ENCODE measurements at regions of chr21 and their contacts with region 1.

Region 1: DNA sequence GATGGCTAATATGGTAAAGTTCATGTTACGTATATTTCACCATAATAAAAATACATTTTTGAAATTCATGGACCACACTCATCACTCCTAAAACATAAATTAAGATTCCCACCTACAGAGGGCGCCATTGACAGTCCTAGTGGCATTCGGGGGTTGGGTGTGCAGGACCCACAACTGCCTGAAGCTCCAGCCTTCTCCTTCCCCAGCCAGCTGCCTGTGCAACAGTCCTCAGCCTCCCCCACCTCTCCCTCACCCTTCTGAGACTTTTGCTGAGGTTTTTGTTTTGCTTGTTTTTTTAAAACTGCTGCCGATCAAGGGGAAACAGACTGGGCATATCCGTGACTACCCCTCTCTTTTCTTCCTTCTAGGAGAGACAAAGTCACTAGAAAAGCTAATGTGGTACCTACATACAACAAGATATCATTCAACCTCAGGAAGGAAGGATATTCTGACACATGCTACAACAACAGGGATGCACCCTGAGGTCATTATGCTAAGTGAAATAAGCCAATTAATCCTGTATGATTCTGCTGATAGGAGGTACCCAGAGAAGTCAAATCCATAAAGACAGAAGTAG is 9.2 kb upstream of the EVA1C start:
- DNase-seq: peak; percentile 59 to 83 (median 79)
- H3K4me3 ChIP-seq: no peak overlapping the region
- H3K27ac ChIP-seq: no peak overlapping the region
- H3K4me1 ChIP-seq: no peaks in the 10 kb centered on the region
- H3K27me3 ChIP-seq: peaks cover 0 to 5% (median 3%) of the 10 kb centered on the region in 5 experiments

Region 2: GRCh38 chr21:32131960-32132359 is 271.3 kb before region 1 on chr21:
- CTCF ChIA-PET with region 1: no interaction called
- POLR2A ChIA-PET with region 1: no interaction called
- DNase-seq: no peak
- H3K4me3 ChIP-seq: no peak overlapping the region
- H3K27ac ChIP-seq: no peak overlapping the region
- H3K4me1 ChIP-seq: no peaks in the 10 kb centered on the region
- H3K27me3 ChIP-seq: peaks cover 0 to 6% (median 0%) of the 10 kb centered on the region in 5 experiments

Region 3: DNA sequence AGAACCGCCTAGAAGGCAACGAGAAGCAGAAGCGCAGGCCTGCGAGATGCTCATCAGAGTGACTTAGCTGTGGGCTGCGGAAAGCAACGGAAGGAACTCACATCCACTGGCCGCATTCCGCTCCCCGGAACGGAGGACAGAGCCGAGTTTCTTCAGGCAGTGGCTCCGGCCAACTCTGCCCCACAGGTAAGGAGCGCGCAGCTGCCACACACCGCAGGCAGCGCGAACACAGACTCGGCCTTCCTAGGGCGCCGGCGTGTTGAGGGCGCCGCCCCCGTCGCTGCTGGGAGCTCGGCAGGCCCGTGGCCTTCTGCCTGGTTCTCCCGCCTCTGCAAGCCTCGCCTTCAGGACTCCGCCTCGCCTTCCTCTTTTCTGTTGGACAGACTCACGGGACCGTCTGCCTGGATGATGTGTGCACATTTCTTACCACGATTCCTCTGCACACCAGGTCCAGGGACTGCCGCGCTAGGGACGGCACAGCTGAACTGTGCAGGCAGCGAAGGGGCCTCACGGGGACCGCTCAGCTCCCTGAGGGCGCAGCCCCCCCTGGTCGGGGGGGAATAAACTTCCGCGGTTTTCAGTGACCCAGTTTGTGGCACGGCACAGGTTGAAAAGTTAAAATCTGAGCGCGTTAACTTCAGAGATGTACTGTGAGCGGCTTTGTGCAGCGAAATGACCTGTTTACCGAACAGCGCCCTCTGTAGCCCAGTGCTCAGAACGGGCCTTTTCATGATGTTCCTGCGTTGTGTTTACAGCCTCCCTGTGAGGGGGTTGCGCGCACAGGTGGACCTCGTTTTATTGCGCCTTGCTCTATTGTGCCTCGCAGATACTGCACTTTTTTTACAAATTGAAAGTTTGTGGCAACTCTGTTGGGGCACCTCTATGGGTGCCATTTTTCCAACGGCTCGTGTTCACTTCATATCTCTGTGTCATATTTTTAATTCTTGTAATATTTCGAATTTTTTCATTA is 166.3 kb after region 1 on chr21:
- CTCF ChIA-PET with region 1: interaction called, 16 read pairs
- POLR2A ChIA-PET with region 1: no interaction called
- DNase-seq: peak; percentile 85 to 93 (median 92)
- H3K4me3 ChIP-seq: peak overlapping the region; percentile 42 to 82 (median 69)
- H3K27ac ChIP-seq: peak overlapping the region in 1 of 2 experiments; percentile 49
- H3K4me1 ChIP-seq: peaks cover 0 to 18% (median 11%) of the 10 kb centered on the region in 4 experiments
- H3K27me3 ChIP-seq: no peaks in the 10 kb centered on the region

Region 4: GRCh38 chr21:32604464-32604863 is 201.2 kb after region 1 on chr21:
- CTCF ChIA-PET with region 1: interaction called, 110 read pairs
- POLR2A ChIA-PET with region 1: interaction called, 3 read pairs
- DNase-seq: no peak
- H3K4me3 ChIP-seq: no peak overlapping the region
- H3K27ac ChIP-seq: no peak overlapping the region
- H3K4me1 ChIP-seq: no peaks in the 10 kb centered on the region
- H3K27me3 ChIP-seq: no peaks in the 10 kb centered on the region

Measured in common myeloid progenitor, CD34-positive (primary cell).